ENCODE measurements at regions of chr19 and their contacts with region 1.

Region 1: GRCh38 chr19:17938092-17938845 is 5.5 kb downstream of the CCDC124 start:
- DNase-seq: peak; percentile 92
- H3K4me3 Mint-ChIP-seq: no peak overlapping the region
- H3K27ac Mint-ChIP-seq: no peak overlapping the region
- H3K4me1 Mint-ChIP-seq: peaks cover 15% of the 10 kb centered on the region
- H3K27me3 Mint-ChIP-seq: no peaks in the 10 kb centered on the region

Region 2: GRCh38 chr19:17871878-17872250 is 66.4 kb before region 1 on chr19 and contains the start of gene SLC5A5:
- CTCF ChIA-PET with region 1: interaction called, 25 read pairs
- intact Hi-C with region 1: no loop called
- DNase-seq: peak; percentile 49
- H3K4me3 Mint-ChIP-seq: peak within 1 kb of the TSS; percentile 81
- H3K27ac Mint-ChIP-seq: peak within 1 kb of the TSS; percentile 46
- H3K4me1 Mint-ChIP-seq: peaks cover 15% of the 10 kb centered on the region
- H3K27me3 Mint-ChIP-seq: no peaks in the 10 kb centered on the region
- total RNA-seq, gene SLC5A5: 1.1 to 1.2 TPM

Region 3: GRCh38 chr19:17893766-17894165 is 44.5 kb before region 1 on chr19:
- CTCF ChIA-PET with region 1: no interaction called
- intact Hi-C with region 1: no loop called
- DNase-seq: no peak
- H3K4me3 Mint-ChIP-seq: no peak overlapping the region
- H3K27ac Mint-ChIP-seq: no peak overlapping the region
- H3K4me1 Mint-ChIP-seq: no peaks in the 10 kb centered on the region
- H3K27me3 Mint-ChIP-seq: no peaks in the 10 kb centered on the region

Region 4: GRCh38 chr19:17966550-17967256 is 28.4 kb after region 1 on chr19 and contains the start of gene KCNN1:
- CTCF ChIA-PET with region 1: interaction called, 10 read pairs
- intact Hi-C with region 1: no loop called
- DNase-seq: no peak
- H3K4me3 Mint-ChIP-seq: no peak within 1 kb of the TSS
- H3K27ac Mint-ChIP-seq: no peak within 1 kb of the TSS
- H3K4me1 Mint-ChIP-seq: peaks cover 9% of the 10 kb centered on the region
- H3K27me3 Mint-ChIP-seq: peaks cover 36% of the 10 kb centered on the region
- total RNA-seq, gene KCNN1: 0.21 to 0.30 TPM

Region 5: GRCh38 chr19:18058208-18059030 is 120.2 kb after region 1 on chr19:
- CTCF ChIA-PET with region 1: interaction called, 3 read pairs
- intact Hi-C with region 1: loop called (anchors 1 kb)
- DNase-seq: peak; percentile 86
- H3K4me3 Mint-ChIP-seq: no peak overlapping the region
- H3K27ac Mint-ChIP-seq: peak overlapping the region; percentile 59
- H3K4me1 Mint-ChIP-seq: peaks cover 11% of the 10 kb centered on the region
- H3K27me3 Mint-ChIP-seq: no peaks in the 10 kb centered on the region

Region 6: DNA sequence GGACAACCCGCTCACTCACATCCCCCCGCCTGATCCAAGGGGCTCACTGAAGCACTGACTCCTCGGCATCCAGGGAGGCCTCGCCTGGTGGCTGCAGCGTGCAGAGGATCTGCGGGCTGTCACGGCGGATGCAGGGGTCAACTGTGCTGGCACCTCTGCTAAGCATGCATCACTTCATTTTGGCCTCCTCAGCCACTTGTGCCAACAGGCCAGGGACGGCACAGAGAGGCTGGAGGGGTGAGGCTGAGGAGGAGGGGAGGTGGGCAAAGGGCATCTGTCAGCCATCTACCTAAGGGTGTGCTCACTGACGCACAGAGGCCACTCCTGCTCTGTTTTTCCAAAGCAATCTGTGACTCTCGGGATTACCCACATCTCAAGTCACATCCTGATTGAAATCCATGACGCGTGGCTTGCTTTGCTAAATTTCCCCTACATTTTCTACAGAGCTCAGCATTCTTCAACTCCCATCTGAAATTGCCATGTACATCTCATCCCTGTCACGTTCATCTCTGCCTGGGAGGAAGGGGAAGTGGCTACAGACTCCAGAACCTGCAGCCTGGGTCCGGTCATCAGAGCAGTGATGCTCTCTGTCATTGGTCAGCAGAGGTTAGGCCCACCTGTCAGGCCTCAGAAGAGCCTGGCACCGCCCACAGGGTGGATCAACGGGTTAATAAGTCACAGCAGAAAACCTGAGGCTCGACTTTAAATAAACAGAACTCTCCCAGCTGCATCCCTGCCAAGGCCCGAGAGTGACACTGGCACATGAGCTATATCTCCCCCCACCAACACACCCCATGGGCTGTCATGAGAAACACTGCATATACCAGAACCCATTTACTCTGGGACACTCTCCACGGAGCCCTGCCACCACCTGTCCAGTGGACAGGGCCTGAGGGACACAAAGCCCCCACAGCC is 566.0 kb after region 1 on chr19:
- CTCF ChIA-PET with region 1: no interaction called
- intact Hi-C with region 1: no loop called
- DNase-seq: no peak
- H3K4me3 Mint-ChIP-seq: no peak overlapping the region
- H3K27ac Mint-ChIP-seq: no peak overlapping the region
- H3K4me1 Mint-ChIP-seq: peaks cover 73% of the 10 kb centered on the region
- H3K27me3 Mint-ChIP-seq: no peaks in the 10 kb centered on the region